Posterior vena cava (tissue), 2 donors: ENCODE measurements at regions of chr17 and their contacts with region 1.

Region 1: DNA sequence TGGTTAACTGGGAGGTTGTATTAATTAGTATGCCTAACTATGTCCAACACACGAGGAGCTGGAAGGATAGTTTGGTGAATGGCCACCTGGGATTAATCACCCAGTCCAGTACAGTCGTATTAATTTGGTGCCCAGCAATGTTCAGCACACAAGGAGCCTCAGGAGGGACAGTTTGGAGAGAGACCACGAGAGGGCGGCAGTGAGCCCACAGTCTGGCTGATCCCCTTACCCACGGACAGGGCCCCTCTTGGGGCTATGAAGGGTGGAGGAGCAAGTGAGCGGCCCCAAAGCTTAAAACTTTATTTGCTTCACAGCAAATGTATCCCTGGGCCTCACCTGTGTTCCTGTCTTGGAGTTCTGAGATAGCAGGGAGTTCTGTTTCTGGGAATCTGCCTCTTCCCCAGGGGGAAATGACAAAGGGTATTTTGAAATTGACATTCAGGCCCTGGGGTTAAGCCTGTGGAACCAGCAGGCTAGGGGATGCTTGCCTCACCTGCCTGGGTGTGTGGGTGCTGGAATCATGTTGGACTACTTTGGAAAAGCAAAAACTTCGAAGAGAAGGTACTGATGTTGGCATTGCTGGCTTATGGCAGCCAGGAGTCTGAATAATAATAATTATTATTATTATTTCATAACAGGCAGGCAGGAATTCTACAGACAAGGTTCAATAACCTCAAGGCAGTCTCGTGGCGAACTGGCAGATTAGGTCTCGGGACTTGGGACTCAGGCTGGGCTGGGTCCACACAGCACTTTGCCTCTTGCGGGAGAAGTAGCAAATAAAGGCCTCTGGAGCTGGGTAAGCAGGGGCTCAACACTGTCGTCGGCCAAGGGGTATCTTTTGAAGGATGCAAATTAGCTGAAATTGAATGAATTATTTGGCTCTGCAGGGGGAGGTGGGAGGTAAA is 227.6 kb upstream of the ASIC2 start:
- DNase-seq: no peak

Region 2: GRCh38 chr17:33647956-33648355 is 127.3 kb after region 1 on chr17:
- intact Hi-C with region 1: loop called (anchors 5 to 10 kb)
- DNase-seq: no peak

Region 3: DNA sequence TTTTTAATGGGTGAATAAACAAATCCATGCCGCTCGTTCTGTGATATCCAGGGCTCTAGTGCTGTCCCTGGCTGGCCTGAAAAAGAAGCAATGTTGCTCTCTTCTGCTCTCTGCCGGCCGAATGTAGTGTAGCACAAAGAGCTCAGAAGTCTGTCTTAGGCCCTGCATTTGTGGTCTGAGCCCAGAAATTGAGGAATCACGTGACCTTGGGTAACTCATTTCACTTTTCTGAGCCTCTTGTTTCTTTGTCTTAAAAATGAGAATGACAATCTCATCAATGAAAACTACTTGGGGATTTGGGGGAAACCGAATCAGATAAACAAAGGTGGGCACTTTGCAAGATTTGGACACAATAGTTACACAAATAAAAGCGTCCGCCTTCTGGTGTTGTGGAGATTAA is 154.0 kb after region 1 on chr17:
- intact Hi-C with region 1: loop called in 1 of 2 experiments (anchors 10 kb)
- DNase-seq: peak; percentile 87